CD4-positive, alpha-beta T cell (primary cell): ENCODE measurements at regions of chr10 and their contacts with region 1.

Region 1: DNA sequence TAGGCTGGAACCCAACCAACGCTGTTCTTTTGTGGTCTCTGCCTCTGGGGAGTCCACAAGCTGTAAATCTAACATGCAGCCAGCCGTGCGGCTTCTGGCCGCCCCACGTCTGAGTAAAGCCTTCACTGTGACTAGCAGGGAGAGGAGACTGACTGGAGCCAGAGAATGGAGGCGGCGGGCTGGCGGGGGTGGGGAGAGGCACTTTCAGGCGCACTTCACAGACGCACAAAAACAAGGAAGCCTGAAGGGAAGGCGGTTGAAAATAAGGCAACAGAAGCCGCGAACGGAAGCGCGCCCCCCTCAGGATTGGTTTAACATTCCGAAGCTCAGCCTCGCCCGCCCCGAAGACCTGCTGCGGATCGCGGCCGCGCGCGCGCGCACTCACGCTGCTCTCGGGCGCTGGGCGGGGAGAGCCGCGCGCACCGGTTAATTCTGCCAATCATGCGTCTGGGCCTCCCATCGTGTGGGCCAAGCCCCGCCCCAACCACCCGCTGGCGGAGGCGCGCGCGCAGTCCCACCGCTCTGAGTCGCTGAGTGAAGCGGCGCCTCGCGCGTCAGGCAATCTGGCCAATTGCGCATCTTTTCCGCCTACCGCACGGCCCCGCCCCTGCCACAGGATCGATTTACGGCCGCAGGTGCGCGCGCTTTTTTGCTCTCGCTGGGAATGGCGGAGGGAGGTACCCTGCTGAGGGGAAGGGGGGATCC is at the start of gene SFR1:
- DNase-seq: peak; percentile 97 to 100 (median 99)
- ATAC-seq: peak; percentile 89
- H3K4me3 ChIP-seq: peak within 1 kb of the TSS; percentile 94
- H3K4me3 Mint-ChIP-seq: peak within 1 kb of the TSS; percentile 97
- H3K27ac ChIP-seq: peak within 1 kb of the TSS; percentile 96 to 100
- H3K27ac Mint-ChIP-seq: peak within 1 kb of the TSS; percentile 100
- H3K4me1 ChIP-seq: peaks cover 10% of the 10 kb centered on the region
- H3K4me1 Mint-ChIP-seq: peaks cover 37% of the 10 kb centered on the region
- H3K27me3 ChIP-seq: no peaks in the 10 kb centered on the region
- H3K27me3 Mint-ChIP-seq: no peaks in the 10 kb centered on the region
- CTCF ChIP-seq: peak; percentile 58
- total RNA-seq, gene SFR1: 7.2 to 7.7 TPM

Region 2: GRCh38 chr10:103888113-103888841 is 233.4 kb before region 1 on chr10:
- CTCF ChIA-PET with region 1: interaction called, 8 read pairs
- POLR2A ChIA-PET with region 1: interaction called, 12 read pairs
- intact Hi-C with region 1: loop called (anchors 2 kb)
- DNase-seq: peak in 5 of 14 experiments; percentile 5 to 76 (median 73)
- ATAC-seq: peak; percentile 90
- H3K4me3 ChIP-seq: no peak overlapping the region
- H3K4me3 Mint-ChIP-seq: no peak overlapping the region
- H3K27ac ChIP-seq: no peak overlapping the region
- H3K27ac Mint-ChIP-seq: peak overlapping the region; percentile 35
- H3K4me1 ChIP-seq: peaks cover 26% of the 10 kb centered on the region
- H3K4me1 Mint-ChIP-seq: peaks cover 20% of the 10 kb centered on the region
- H3K27me3 ChIP-seq: no peaks in the 10 kb centered on the region
- H3K27me3 Mint-ChIP-seq: no peaks in the 10 kb centered on the region
- CTCF ChIP-seq: peak; percentile 86

Region 3: DNA sequence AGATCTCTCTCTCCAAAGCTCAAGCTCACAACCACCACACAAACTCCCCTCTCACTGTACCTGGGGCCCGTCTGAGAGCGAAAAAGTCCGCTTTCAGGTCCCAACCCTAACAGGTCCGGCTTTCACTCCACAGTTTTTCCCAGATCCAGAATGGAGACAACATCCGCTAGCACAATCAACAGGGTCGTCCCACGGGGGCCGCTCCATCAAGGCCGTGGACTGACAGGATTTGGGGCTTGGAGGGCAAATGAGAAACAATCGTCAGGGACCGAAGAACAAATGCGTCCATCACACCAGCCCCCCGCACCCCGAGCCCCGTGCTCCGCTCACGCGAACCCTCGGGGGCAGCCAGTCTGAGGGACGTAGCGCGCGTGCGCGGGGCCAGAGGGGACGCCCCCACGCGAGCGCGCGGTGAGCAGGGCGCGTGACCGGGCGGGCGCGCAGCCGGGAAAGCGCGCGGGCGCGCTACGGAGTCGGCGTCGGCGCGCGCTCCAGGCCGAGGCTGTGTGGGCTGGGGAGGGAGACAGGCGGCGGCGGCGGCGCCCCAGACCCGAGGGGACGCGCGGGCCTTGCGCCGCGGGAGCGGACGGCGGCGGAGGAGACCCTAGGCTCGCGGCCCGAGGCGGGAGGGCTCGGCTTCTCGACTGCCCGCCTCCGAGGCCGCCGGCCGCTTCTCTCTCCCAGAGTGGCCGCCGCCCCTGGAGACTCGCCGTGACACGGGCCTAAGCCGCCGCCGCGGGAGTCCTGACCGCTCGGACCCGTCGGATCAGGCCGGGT is 154.8 kb before region 1 on chr10 and contains the start of gene SLK:
- CTCF ChIA-PET with region 1: interaction called, 9 read pairs
- POLR2A ChIA-PET with region 1: interaction called, 45 read pairs
- intact Hi-C with region 1: loop called (anchors 1 kb)
- DNase-seq: peak; percentile 59 to 96 (median 81)
- ATAC-seq: peak; percentile 82
- H3K4me3 ChIP-seq: peak within 1 kb of the TSS; percentile 94
- H3K4me3 Mint-ChIP-seq: peak within 1 kb of the TSS; percentile 95
- H3K27ac ChIP-seq: peak within 1 kb of the TSS; percentile 76 to 83
- H3K27ac Mint-ChIP-seq: peak within 1 kb of the TSS; percentile 91
- H3K4me1 ChIP-seq: peaks cover 13% of the 10 kb centered on the region
- H3K4me1 Mint-ChIP-seq: peaks cover 43% of the 10 kb centered on the region
- H3K27me3 ChIP-seq: no peaks in the 10 kb centered on the region
- H3K27me3 Mint-ChIP-seq: no peaks in the 10 kb centered on the region
- CTCF ChIP-seq: no peak
- total RNA-seq, gene SLK: 20.5 to 20.8 TPM

Region 4: GRCh38 chr10:104109908-104110662 is 11.6 kb before region 1 on chr10:
- CTCF ChIA-PET with region 1: interaction called, 8 read pairs
- POLR2A ChIA-PET with region 1: interaction called, 13 read pairs
- intact Hi-C with region 1: no loop called
- DNase-seq: peak in 1 of 14 experiments; percentile 24
- ATAC-seq: no peak
- H3K4me3 ChIP-seq: no peak overlapping the region
- H3K4me3 Mint-ChIP-seq: no peak overlapping the region
- H3K27ac ChIP-seq: no peak overlapping the region
- H3K27ac Mint-ChIP-seq: no peak overlapping the region
- H3K4me1 ChIP-seq: no peaks in the 10 kb centered on the region
- H3K4me1 Mint-ChIP-seq: no peaks in the 10 kb centered on the region
- H3K27me3 ChIP-seq: peaks cover 2 to 4% of the 10 kb centered on the region in 2 experiments
- H3K27me3 Mint-ChIP-seq: peaks cover 20% of the 10 kb centered on the region
- CTCF ChIP-seq: no peak

Region 5: DNA sequence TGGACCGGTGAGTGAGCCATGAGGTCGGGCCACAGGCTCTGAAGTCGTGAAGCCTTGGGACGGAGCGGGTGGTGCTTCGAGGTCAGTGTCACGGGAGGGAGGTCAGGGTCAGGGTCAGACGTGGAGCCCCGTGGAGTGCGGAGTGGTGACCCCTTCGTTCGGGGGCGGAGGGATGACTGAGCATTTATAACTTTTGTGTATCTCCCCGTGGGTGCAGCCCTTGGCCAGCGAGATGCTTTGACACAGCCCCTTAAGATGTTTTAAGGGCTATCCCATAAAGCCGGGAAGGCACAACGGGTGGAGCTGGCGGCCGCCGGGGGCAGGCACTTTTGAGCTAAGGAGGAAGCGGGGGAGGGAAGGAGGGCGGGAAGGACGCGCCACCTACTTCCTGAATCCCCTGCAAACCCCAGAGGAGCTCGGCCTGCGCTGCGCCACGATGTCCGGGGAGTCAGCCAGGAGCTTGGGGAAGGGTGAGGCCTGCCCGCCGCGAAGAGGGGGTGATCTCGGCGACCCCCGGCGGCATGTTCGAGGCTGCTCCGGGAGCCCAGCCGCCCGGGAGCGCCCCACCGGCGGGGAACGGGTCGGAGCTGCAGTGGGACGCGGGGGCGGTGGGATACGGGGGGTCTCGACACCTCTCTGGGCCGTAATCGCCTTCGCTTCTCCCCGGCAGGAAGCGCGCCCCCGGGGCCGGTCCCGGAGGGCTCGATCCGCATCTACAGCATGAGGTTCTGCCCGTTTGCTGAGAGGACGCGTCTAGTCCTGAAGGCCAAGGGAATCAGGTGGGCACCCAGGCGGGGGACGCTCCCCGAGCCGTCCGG is 133.0 kb after region 1 on chr10 and contains the start of gene GSTO1:
- CTCF ChIA-PET with region 1: no interaction called
- POLR2A ChIA-PET with region 1: interaction called, 15 read pairs
- intact Hi-C with region 1: no loop called
- DNase-seq: peak in 13 of 14 experiments; percentile 13 to 77 (median 46)
- ATAC-seq: peak; percentile 50
- H3K4me3 ChIP-seq: peak within 1 kb of the TSS; percentile 98
- H3K4me3 Mint-ChIP-seq: peak within 1 kb of the TSS; percentile 99
- H3K27ac ChIP-seq: peak within 1 kb of the TSS; percentile 73 to 83
- H3K27ac Mint-ChIP-seq: peak within 1 kb of the TSS; percentile 87
- H3K4me1 ChIP-seq: peaks cover 27% of the 10 kb centered on the region
- H3K4me1 Mint-ChIP-seq: peaks cover 51% of the 10 kb centered on the region
- H3K27me3 ChIP-seq: no peaks in the 10 kb centered on the region
- H3K27me3 Mint-ChIP-seq: no peaks in the 10 kb centered on the region
- CTCF ChIP-seq: no peak
- total RNA-seq, gene GSTO1: 23.9 to 26.1 TPM

Region 6: GRCh38 chr10:104925232-104925851 is 803.7 kb after region 1 on chr10:
- CTCF ChIA-PET with region 1: no interaction called
- POLR2A ChIA-PET with region 1: no interaction called
- intact Hi-C with region 1: no loop called
- DNase-seq: peak in 4 of 14 experiments; percentile 31 to 48 (median 42)
- ATAC-seq: no peak
- H3K4me3 ChIP-seq: no peak overlapping the region
- H3K4me3 Mint-ChIP-seq: no peak overlapping the region
- H3K27ac ChIP-seq: no peak overlapping the region
- H3K27ac Mint-ChIP-seq: no peak overlapping the region
- H3K4me1 ChIP-seq: no peaks in the 10 kb centered on the region
- H3K4me1 Mint-ChIP-seq: no peaks in the 10 kb centered on the region
- H3K27me3 ChIP-seq: no peaks in the 10 kb centered on the region
- H3K27me3 Mint-ChIP-seq: peaks cover 4% of the 10 kb centered on the region
- CTCF ChIP-seq: peak; percentile 57